A673 (cell line): ENCODE measurements at regions of chr10 and their contacts with region 1.

Region 1: GRCh38 chr10:24858288-24859270 is 93.8 kb downstream of the PRTFDC1 start:
- DNase-seq: peak; percentile 89
- H3K4me3 ChIP-seq: no peak overlapping the region
- H3K27ac ChIP-seq: peak overlapping the region; percentile 34
- H3K4me1 ChIP-seq: peaks cover 24% of the 10 kb centered on the region
- H3K27me3 ChIP-seq: no peaks in the 10 kb centered on the region
- CTCF ChIP-seq: no peak

Region 2: DNA sequence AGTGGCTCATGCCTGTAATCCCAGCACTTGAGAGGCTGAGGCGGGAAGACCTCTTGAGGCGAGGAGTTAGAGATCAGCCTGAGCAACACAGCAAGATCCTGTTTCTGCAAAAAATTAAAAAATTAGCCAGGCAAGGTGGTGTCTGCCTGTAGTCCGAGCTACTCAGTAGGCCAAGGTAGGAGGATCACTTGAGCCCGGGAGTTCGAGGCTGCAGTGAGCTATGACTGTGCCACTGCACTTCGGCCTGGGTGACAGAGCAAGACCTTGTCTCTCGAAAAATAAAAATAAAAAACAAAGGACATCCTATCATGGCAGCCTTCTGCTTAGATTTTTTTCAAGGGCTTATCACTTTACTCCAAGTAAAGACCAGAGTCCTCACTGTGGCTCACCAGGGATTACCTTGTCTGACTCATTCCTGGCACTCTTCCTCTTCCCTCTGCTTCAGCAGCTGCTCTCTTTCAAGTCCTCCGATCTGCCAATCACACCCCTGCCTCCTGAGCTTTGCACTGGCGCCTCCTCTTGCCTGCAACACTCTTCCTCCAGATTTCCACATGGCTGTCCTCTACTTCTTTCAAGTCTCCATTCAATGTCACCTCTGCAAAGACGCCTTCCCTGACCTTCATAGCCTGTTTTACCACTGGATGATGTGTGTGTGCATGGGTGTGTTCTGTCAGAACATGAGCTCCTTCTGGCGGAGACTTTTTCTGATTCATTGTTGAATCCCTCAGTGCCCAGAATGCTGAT is 86.1 kb after region 1 on chr10:
- CTCF ChIA-PET with region 1: no interaction called
- POLR2A ChIA-PET with region 1: no interaction called
- intact Hi-C with region 1: loop called (anchors 5 kb)
- DNase-seq: peak; percentile 65
- H3K4me3 ChIP-seq: no peak overlapping the region
- H3K27ac ChIP-seq: no peak overlapping the region
- H3K4me1 ChIP-seq: peaks cover 15% of the 10 kb centered on the region
- H3K27me3 ChIP-seq: no peaks in the 10 kb centered on the region
- CTCF ChIP-seq: no peak; the same call in 1 of the 2 replicates